A549 (cell line): ENCODE measurements at regions of chr7 and their contacts with region 1.

Region 1: DNA sequence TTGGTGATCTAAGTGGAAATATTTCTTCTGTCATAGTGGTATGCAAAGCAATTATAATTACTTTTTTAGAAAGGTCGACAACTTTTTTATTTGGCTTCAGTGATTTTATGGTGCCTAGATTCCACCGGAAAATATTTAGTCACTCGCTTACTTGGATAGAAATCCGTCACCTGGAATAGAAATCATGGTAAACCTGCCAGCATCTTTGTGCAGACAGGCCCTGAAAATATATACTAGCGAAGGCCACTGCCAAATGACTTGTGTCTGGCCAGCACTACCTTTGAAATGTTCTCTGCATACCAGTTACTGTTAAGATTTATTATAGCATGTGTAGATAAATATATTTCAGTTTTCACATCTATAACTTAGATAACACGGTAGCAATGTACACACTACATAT is 226.4 kb downstream of the AGMO start:
- DNase-seq: no peak
- ATAC-seq: no peak
- H3K4me3 ChIP-seq: no peak overlapping the region
- H3K27ac ChIP-seq: no peak overlapping the region
- H3K4me1 ChIP-seq: no peaks in the 10 kb centered on the region
- CTCF ChIP-seq: no peak
- EP300 ChIP-seq: no peak
- POLR2A ChIP-seq: no peak
- RAD21 ChIP-seq: no peak

Region 2: DNA sequence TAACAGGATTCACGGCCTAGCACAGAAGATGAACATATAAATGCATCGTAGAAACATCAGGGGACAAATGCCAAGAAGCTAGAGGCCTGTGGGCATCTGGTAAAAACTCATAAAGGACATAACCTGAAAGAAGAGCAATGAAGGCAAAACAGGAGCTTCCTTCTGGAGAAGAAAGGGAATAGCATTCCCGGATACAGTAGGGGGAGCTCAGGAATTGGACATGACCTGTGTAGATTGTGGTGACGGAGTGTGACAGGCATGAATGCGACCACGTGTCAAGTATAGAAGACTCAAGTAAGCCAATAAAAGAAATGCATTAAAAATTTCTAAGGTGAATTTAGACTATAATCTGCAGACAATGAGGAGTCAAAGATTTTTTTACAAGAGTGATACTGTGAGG is 43.7 kb before region 1 on chr7:
- CTCF ChIA-PET with region 1: no interaction called
- POLR2A ChIA-PET with region 1: interaction called, 11 read pairs
- DNase-seq: peak in 1 of 2 experiments; percentile 12
- ATAC-seq: peak in 1 of 2 experiments; percentile 61; a peak in 2 of 6 replicates
- H3K4me3 ChIP-seq: no peak overlapping the region
- H3K27ac ChIP-seq: no peak overlapping the region
- H3K4me1 ChIP-seq: no peaks in the 10 kb centered on the region
- CTCF ChIP-seq: no peak
- EP300 ChIP-seq: no peak
- POLR2A ChIP-seq: no peak
- RAD21 ChIP-seq: peak in 1 of 2 experiments; percentile 13; a peak in 1 of 5 replicates

Region 3: GRCh38 chr7:15313361-15313760 is 22.0 kb before region 1 on chr7:
- CTCF ChIA-PET with region 1: no interaction called
- POLR2A ChIA-PET with region 1: no interaction called
- DNase-seq: no peak
- ATAC-seq: no peak
- H3K4me3 ChIP-seq: no peak overlapping the region
- H3K27ac ChIP-seq: no peak overlapping the region
- H3K4me1 ChIP-seq: no peaks in the 10 kb centered on the region
- CTCF ChIP-seq: no peak
- EP300 ChIP-seq: no peak
- POLR2A ChIP-seq: no peak
- RAD21 ChIP-seq: no peak